Right cardiac atrium (tissue), 5 donors: ENCODE measurements at regions of chr10 and their contacts with region 1.

Region 1: DNA sequence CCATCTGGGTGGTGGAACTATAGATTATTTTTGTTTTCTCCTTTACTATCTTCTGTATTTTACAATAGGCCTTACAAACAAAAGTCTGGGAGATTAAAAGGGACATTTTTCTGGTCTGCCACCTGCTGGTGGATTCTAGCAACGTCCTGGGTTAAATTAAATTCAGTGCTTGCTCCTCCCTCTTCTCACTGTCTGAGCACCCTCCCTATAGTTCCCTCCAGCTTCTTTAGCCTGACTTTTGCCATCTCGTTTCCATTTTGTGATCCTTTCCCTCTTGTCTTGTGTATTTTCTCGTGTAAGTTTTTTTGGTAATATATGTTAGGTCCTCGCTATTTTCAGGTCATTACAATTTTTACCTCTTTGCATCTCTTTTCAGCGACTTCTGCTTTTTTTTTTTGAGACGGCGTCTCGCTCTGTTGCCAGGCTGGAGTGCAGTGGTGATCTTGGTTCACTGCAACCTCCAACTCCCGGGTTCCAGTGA is 16.1 kb downstream of the ANKRD16 start:
- DNase-seq: peak; percentile 39 to 73 (median 62)
- ATAC-seq: peak; percentile 78 to 85
- H3K4me3 ChIP-seq: no peak overlapping the region
- H3K27ac ChIP-seq: no peak overlapping the region
- H3K4me1 ChIP-seq: no peaks in the 10 kb centered on the region
- H3K27me3 ChIP-seq: no peaks in the 10 kb centered on the region

Region 2: GRCh38 chr10:5684318-5684970 is 189.1 kb before region 1 on chr10 and contains the start of gene TASOR2:
- intact Hi-C with region 1: loop called in 2 of 4 experiments (anchors 10 kb)
- DNase-seq: peak; percentile 99 to 100 (median 99)
- ATAC-seq: peak; percentile 98
- H3K4me3 ChIP-seq: peak within 1 kb of the TSS; percentile 80
- H3K27ac ChIP-seq: peak within 1 kb of the TSS; percentile 79
- H3K4me1 ChIP-seq: no peaks in the 10 kb centered on the region
- H3K27me3 ChIP-seq: no peaks in the 10 kb centered on the region
- total RNA-seq, gene TASOR2: 41.1 to 51.7 (median 49.3) TPM

Region 3: DNA sequence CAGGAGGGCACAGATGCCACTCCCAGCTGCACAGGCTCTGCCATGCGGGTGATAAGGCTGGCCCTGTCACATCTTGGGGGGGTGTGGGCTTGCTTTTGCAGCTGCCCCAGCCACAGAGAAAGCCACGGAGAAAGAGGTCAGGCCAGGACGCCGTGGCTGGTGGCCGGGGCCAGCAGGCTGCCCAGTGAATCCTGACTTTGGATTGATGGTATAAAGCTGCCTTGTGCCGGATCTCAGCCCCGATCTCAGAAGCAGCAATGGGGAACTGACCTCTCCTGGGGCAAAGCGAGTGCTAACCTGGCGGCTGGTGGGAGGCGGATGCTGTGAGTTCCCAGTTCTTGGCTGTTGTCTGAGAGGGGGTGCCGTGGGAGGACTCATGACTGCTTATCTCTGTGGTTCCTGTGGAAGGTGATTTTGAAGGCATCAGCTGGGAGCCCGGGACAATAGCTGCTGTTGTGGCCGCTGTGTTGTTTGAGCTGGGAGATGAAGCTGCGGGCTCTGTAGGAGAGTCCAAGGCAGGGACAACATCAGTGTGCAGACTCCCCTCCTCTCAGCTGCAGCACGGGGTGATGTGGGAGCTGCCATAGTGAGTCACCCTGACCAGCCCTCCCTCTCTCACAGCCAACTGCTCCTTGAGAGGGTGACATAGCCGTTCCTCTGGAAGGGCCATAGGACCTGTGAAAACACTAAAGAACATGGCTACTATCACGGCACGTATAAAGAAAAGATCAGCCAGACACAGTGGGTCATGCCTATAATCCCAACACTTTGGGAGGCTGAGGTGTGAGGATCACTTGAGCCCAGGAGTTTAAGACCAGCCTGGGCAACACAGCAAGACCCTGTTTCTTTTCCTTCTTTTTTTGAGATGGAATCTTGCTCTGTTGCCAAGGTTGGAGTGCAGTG is 86.8 kb after region 1 on chr10:
- intact Hi-C with region 1: no loop called
- DNase-seq: peak in 1 of 3 donors; percentile 54
- ATAC-seq: peak; percentile 26 to 50
- H3K4me3 ChIP-seq: no peak overlapping the region
- H3K27ac ChIP-seq: no peak overlapping the region
- H3K4me1 ChIP-seq: no peaks in the 10 kb centered on the region
- H3K27me3 ChIP-seq: no peaks in the 10 kb centered on the region